ENCODE measurements at regions of chr4 and their contacts with region 1.

Region 1: GRCh38 chr4:127732613-127733328 is 2.6 kb downstream of the SLC25A31 start:
- DNase-seq: no peak
- ATAC-seq: peak; percentile 48

Region 2: GRCh38 chr4:127604949-127605709 is 127.6 kb before region 1 on chr4:
- intact Hi-C with region 1: loop called (anchors 5 kb)
- DNase-seq: no peak
- ATAC-seq: no peak